ENCODE measurements at regions of chr5 and their contacts with region 1.

Region 1: GRCh38 chr5:82225525-82226172 is 52.5 kb downstream of the RPS23 start:
- DNase-seq: peak; percentile 72
- H3K4me3 Mint-ChIP-seq: no peak overlapping the region
- H3K27ac Mint-ChIP-seq: no peak overlapping the region
- H3K4me1 Mint-ChIP-seq: peaks cover 4% of the 10 kb centered on the region
- H3K27me3 Mint-ChIP-seq: no peaks in the 10 kb centered on the region

Region 2: GRCh38 chr5:81425569-81425968 is 800.1 kb before region 1 on chr5:
- CTCF ChIA-PET with region 1: interaction called, 19 read pairs
- DNase-seq: no peak
- H3K4me3 Mint-ChIP-seq: no peak overlapping the region
- H3K27ac Mint-ChIP-seq: no peak overlapping the region
- H3K4me1 Mint-ChIP-seq: peaks cover 12% of the 10 kb centered on the region
- H3K27me3 Mint-ChIP-seq: no peaks in the 10 kb centered on the region

Region 3: GRCh38 chr5:82174128-82174918 is 51.3 kb before region 1 on chr5:
- CTCF ChIA-PET with region 1: interaction called, 12 read pairs
- DNase-seq: peak; percentile 79
- H3K4me3 Mint-ChIP-seq: no peak overlapping the region
- H3K27ac Mint-ChIP-seq: no peak overlapping the region
- H3K4me1 Mint-ChIP-seq: peaks cover 6% of the 10 kb centered on the region
- H3K27me3 Mint-ChIP-seq: no peaks in the 10 kb centered on the region